Activated CD4-positive, alpha-beta T cell treated with anti-CD3 and anti-CD28 coated beads, Interleukin-2, amount 10 ng/mL, durations not matched to agents 24 days and 14 days (primary cell): ENCODE measurements at regions of chr7 and their contacts with region 1.

Region 1: DNA sequence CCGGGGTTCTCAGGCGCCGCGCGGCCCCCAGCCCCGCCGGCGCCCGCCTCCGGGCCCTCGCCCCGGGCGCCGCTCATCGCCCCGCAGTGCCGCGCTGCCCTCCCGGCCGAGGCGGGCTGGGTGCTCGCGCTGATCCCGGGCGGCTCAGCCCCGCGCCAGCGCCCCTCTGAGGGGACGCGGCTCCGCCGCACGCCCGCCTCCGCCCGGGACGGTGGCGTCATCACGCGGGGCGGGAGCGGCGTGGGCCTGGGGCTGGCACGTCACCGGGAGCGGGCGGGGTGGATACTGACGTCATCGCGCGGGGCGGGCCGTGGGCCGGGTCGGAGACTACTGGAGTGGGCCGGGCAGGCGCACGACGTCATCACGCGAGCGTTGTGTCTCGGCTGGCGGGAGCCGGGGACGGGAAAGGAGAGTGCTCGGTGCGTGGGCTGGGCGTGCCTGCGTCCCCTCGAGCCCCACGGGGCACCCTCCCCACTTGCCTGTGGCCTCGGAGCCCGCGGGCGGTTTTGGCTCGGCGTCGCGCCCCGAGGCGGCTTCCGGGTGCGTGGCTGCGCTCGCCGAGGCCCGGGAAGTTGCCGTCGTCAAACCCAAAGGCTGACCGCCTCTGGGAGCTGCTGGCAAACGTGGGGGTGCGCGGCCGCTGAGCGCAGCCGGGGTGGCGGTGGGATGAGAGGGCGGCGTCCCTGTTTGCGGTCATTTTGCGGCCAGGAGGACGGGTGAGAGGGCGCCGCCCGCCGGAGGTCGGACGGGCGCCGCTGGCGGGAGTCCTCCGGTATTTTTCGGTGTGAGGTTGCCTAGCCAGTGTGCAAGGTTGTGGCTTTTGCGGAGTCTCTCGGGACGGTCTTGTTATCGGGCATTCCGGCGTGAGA is at the start of gene ESYT2:
- DNase-seq: peak; percentile 100
- H3K4me3 Mint-ChIP-seq: peak within 1 kb of the TSS; percentile 87
- H3K27ac Mint-ChIP-seq: peak within 1 kb of the TSS; percentile 93
- H3K4me1 Mint-ChIP-seq: peaks cover 39% of the 10 kb centered on the region
- H3K27me3 Mint-ChIP-seq: peaks cover 11% of the 10 kb centered on the region
- total RNA-seq, gene ESYT2: 60.3 and 61.3 TPM in 2 replicates

Region 2: GRCh38 chr7:158353606-158354570 is 475.7 kb before region 1 on chr7:
- intact Hi-C with region 1: no loop called
- DNase-seq: peak; percentile 70
- H3K4me3 Mint-ChIP-seq: no peak overlapping the region
- H3K27ac Mint-ChIP-seq: no peak overlapping the region
- H3K4me1 Mint-ChIP-seq: no peaks in the 10 kb centered on the region
- H3K27me3 Mint-ChIP-seq: no peaks in the 10 kb centered on the region

Region 3: GRCh38 chr7:158704704-158705468 is 124.7 kb before region 1 on chr7 and contains the start of gene NCAPG2:
- intact Hi-C with region 1: loop called (anchors 1 kb)
- DNase-seq: peak; percentile 99
- H3K4me3 Mint-ChIP-seq: peak within 1 kb of the TSS; percentile 90
- H3K27ac Mint-ChIP-seq: peak within 1 kb of the TSS; percentile 93
- H3K4me1 Mint-ChIP-seq: peaks cover 41% of the 10 kb centered on the region
- H3K27me3 Mint-ChIP-seq: no peaks in the 10 kb centered on the region
- total RNA-seq, gene NCAPG2: 94.6 and 96.3 TPM in 2 replicates

Region 4: GRCh38 chr7:158811461-158811860 is 18.1 kb before region 1 on chr7:
- intact Hi-C with region 1: loop called (anchors 2 kb)
- DNase-seq: peak; percentile 81
- H3K4me3 Mint-ChIP-seq: peak overlapping the region; percentile 65
- H3K27ac Mint-ChIP-seq: peak overlapping the region; percentile 95
- H3K4me1 Mint-ChIP-seq: peaks cover 71% of the 10 kb centered on the region
- H3K27me3 Mint-ChIP-seq: no peaks in the 10 kb centered on the region

Region 5: GRCh38 chr7:158847451-158847866 is 17.9 kb after region 1 on chr7:
- intact Hi-C with region 1: loop called (anchors 1 kb)
- DNase-seq: peak; percentile 76
- H3K4me3 Mint-ChIP-seq: peak overlapping the region; percentile 72
- H3K27ac Mint-ChIP-seq: peak overlapping the region; percentile 96
- H3K4me1 Mint-ChIP-seq: peaks cover 24% of the 10 kb centered on the region
- H3K27me3 Mint-ChIP-seq: no peaks in the 10 kb centered on the region

Region 6: DNA sequence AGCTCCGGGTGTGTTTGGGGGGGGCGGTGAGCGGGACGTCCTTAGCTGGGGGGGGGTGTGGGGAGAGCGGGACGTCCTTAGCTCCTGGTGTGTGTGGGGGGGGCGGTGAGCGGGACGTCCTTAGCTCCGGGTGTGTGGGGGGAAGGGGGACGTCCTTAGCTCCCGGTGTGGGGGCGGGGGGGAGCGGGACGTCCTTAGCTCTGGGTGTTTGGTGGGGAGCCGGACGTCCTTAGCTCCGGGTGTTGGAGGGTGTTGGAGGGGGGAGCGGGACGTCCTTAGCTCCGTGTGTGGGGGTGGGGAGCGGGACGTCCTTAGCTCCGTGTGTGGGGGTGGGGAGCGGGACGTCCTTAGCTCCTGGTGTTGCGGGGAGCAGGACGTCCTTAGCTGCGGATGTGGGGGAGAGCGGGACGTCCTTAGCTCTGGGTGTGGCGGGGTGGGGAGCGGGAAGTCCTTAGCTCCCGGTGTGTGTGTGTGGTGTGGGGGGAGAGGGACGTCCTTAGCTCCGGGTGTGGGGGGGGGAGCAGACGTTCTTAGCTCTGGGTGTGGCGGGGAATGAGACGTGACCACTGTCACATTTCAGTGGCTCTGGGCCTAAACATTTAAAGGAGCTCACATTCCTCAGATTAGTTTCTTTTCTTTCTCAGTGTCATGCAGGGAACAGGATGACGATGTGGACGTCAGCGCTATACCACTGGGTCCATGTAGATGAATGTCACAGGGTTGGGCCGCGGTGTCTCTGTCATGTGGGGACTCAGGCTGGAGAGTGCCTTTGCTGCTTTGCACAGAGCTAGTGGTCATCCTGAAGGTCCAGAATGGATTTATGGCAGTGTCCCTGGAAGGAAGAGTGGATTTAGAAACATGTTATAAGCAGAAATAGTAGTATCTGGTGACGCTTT is 34.3 kb after region 1 on chr7:
- intact Hi-C with region 1: loop called (anchors 1 kb)
- DNase-seq: peak; percentile 85
- H3K4me3 Mint-ChIP-seq: peak overlapping the region; percentile 93
- H3K27ac Mint-ChIP-seq: peak overlapping the region; percentile 97
- H3K4me1 Mint-ChIP-seq: peaks cover 59% of the 10 kb centered on the region
- H3K27me3 Mint-ChIP-seq: no peaks in the 10 kb centered on the region